ENCODE measurements at regions of chr2 and their contacts with region 1.

Region 1: GRCh38 chr2:150742094-150742493 is 254.6 kb upstream of the RND3 start:
- DNase-seq: no peak
- H3K4me3 ChIP-seq: no peak overlapping the region
- H3K27ac ChIP-seq: no peak overlapping the region
- H3K4me1 ChIP-seq: no peaks in the 10 kb centered on the region
- H3K27me3 ChIP-seq: no peaks in the 10 kb centered on the region
- CTCF ChIP-seq: no peak
- EP300 ChIP-seq: no peak
- POLR2A ChIP-seq: no peak

Region 2: DNA sequence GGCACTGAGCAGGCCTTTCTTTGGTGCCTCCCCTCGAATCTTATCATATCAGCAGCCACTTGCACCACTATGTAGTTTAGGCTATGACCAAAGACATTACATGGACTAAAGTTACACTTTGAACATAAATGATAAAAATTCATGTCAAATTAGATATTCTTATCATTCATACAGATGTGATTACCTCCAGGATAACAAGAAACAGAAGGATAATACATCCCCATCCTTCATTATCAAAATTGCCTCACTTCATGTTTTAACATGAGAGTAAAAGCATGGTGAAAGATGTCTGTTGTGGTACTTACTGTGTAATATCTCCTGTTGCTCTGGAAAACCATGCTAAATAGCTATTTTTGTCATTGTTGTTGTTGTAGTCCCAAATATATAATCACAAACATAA is 23.8 kb before region 1 on chr2:
- in situ Hi-C with region 1: no loop called
- intact Hi-C with region 1: loop called (anchors 1 kb)
- DNase-seq: no peak
- H3K4me3 ChIP-seq: no peak overlapping the region
- H3K27ac ChIP-seq: no peak overlapping the region
- H3K4me1 ChIP-seq: no peaks in the 10 kb centered on the region
- H3K27me3 ChIP-seq: no peaks in the 10 kb centered on the region
- CTCF ChIP-seq: no peak
- EP300 ChIP-seq: no peak
- POLR2A ChIP-seq: no peak

Region 3: DNA sequence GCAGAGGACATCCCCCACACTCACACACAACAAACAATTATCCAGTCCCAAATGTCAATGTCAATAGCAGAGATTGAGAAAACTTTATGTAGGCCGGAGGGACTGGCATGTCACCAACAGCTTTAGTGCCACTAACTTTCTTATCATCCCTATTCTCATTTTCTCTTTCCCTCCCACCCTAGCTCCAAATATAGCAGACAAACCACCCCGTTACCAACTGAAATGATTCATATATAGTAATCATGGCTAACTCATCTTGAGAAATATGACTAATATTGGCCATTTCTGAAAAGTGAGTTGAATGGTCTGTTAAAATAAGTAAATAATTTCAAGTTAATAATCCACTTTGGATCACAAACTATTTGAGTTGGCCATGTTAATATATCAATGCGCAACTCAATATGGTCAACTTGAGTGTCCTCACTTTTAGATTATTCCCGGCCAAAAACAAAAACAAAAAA is 12.6 kb before region 1 on chr2:
- in situ Hi-C with region 1: no loop called
- intact Hi-C with region 1: loop called (anchors 1 kb)
- DNase-seq: no peak
- H3K4me3 ChIP-seq: no peak overlapping the region
- H3K27ac ChIP-seq: no peak overlapping the region
- H3K4me1 ChIP-seq: no peaks in the 10 kb centered on the region
- H3K27me3 ChIP-seq: no peaks in the 10 kb centered on the region
- CTCF ChIP-seq: no peak
- EP300 ChIP-seq: no peak
- POLR2A ChIP-seq: no peak